Activated CD8-positive, alpha-beta memory T cell treated with anti-CD3 and anti-CD28 coated beads, Interleukin-2, amount 10 ng/mL, durations not matched to agents 7 days and 5 days (primary cell): ENCODE measurements at regions of chr1 and their contacts with region 1.

Region 1: DNA sequence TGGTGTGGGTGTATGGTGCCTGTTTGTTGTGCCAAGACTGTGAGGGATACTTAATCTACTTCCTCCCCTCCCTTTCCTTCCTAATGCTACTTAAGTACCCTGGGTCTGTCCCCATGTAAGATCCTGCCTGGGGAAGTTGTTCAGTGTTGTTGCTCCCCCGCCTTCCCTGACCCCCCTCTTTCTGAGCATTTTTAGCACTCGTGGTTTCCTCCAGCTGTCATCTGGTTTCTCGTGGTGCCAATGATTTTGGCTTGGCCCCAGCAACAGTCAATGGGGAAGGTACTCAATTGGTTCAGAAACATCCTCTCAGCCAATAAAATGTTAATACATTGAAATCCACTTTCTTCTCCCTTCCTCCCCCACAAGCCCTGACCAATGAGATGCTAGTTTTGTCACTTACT is 8.0 kb upstream of the B4GALT3 start:
- DNase-seq: peak; percentile 93
- ATAC-seq: peak; percentile 80
- H3K4me3 Mint-ChIP-seq: peak overlapping the region; percentile 61
- H3K27ac Mint-ChIP-seq: peak overlapping the region; percentile 96
- H3K4me1 Mint-ChIP-seq: peaks cover 75% of the 10 kb centered on the region
- H3K27me3 Mint-ChIP-seq: no peaks in the 10 kb centered on the region

Region 2: GRCh38 chr1:161153679-161154426 is 31.4 kb before region 1 on chr1 and contains the start of gene UFC1:
- CTCF ChIA-PET with region 1: no interaction called
- DNase-seq: peak; percentile 92
- ATAC-seq: peak; percentile 95
- H3K4me3 Mint-ChIP-seq: peak within 1 kb of the TSS; percentile 99
- H3K27ac Mint-ChIP-seq: peak within 1 kb of the TSS; percentile 100
- H3K4me1 Mint-ChIP-seq: peaks cover 24% of the 10 kb centered on the region
- H3K27me3 Mint-ChIP-seq: no peaks in the 10 kb centered on the region
- total RNA-seq, gene UFC1: 90.7 to 98.4 TPM

Region 3: GRCh38 chr1:161201828-161202725 is 16.8 kb after region 1 on chr1 and contains the start of gene NDUFS2:
- CTCF ChIA-PET with region 1: interaction called, 58 read pairs
- DNase-seq: peak; percentile 99
- ATAC-seq: peak; percentile 99
- H3K4me3 Mint-ChIP-seq: peak within 1 kb of the TSS; percentile 87
- H3K27ac Mint-ChIP-seq: peak within 1 kb of the TSS; percentile 95
- H3K4me1 Mint-ChIP-seq: peaks cover 64% of the 10 kb centered on the region
- H3K27me3 Mint-ChIP-seq: no peaks in the 10 kb centered on the region
- total RNA-seq, gene NDUFS2: 69.4 to 83.9 TPM

Region 4: DNA sequence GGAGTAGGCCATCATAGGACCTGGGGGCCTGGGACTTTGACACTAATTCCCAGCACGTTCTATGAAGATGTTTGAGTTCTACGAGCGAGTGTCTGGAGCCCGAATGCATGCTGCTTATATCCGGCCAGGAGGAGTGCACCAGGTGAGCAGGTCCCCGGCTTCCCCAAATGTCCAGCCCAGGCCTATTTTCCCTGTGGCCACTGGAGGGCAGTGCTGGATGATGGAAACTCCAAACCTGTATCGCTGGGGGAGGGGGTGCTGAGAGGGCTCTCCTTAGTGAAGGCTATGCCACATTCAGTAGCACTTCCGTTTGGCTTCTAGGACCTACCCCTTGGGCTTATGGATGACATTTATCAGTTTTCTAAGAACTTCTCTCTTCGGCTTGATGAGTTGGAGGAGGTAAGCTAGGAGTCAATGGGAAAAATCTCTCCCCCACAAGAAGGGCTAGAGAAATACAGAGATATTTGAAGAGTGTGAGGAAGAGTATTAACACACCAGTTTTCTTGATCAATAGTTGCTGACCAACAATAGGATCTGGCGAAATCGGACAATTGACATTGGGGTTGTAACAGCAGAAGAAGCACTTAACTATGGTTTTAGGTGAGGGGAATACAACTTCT is 24.6 kb after region 1 on chr1:
- CTCF ChIA-PET with region 1: interaction called, 58 read pairs
- DNase-seq: peak; percentile 82
- ATAC-seq: peak; percentile 90
- H3K4me3 Mint-ChIP-seq: no peak overlapping the region
- H3K27ac Mint-ChIP-seq: peak overlapping the region; percentile 57
- H3K4me1 Mint-ChIP-seq: peaks cover 32% of the 10 kb centered on the region
- H3K27me3 Mint-ChIP-seq: no peaks in the 10 kb centered on the region

Region 5: DNA sequence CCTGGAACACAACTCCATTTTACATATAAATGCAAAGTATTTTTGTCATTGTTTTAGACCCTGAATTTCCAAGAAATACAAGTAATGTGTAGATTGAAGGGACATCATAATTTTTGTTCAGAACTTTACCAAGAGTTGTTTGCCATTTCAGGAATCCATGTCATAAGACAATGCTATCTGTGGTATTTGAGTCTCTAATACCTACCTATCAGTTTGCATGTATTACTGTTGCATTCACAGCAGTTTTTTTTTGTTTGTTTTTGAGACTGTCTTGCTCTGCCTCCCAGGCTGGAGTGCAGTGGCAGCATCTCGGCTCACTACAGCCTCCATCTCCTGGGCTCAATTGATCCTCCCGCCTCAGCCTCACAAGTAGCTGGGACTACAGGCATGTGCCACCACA is 107.3 kb after region 1 on chr1:
- CTCF ChIA-PET with region 1: interaction called, 10 read pairs
- DNase-seq: no peak
- ATAC-seq: no peak
- H3K4me3 Mint-ChIP-seq: no peak overlapping the region
- H3K27ac Mint-ChIP-seq: no peak overlapping the region
- H3K4me1 Mint-ChIP-seq: peaks cover 4% of the 10 kb centered on the region
- H3K27me3 Mint-ChIP-seq: no peaks in the 10 kb centered on the region